ENCODE measurements at regions of chr19 and their contacts with region 1.

Region 1: DNA sequence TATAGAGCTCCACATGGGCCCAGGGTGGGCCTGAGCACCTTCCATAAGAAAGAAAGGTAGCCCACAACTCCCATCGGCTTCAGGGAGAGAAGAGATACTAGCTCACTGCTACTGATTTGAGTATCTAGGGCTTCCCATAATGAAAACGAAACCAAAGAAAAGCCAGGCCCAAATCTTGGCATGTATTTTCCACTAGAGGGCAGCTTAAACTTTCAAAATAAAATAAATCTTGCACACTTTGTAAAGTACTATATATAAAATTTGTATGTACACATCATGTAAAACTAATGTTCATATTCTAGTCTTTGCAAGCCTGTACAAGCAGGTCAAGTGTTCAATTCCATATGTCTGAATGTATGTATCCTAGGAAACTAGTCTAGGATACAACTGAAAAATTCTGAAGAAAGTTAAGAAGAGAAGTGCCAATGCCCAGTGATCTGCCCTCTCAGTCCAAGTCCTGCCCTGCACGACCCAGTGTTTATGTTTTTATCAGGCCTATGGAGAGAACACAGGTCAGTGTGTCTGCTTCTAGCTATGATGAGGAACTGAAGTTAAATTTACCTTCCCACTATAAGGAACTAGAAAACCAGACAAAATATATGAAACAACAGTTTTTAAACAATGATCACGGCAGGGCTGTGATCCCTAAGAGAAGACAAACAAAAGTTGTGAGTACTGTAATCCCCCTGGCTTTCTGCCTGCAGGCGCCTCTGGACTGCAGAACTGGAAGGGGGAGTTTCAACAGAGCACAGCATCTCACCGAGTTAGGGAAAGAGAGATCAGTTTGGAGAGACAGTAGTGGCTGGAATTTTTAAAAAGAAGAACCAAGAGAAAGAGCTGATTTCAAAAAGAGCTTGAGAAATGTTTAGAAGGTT is 475.7 kb downstream of the UQCRFS1 start:
- DNase-seq: peak in 2 of 5 donors; percentile 69 to 71
- H3K4me3 ChIP-seq: peak overlapping the region in 1 of 3 donors; percentile 29
- H3K27ac ChIP-seq: no peak overlapping the region
- H3K4me1 ChIP-seq: no peaks in the 10 kb centered on the region
- H3K27me3 ChIP-seq: no peaks in the 10 kb centered on the region
- CTCF ChIP-seq: peak; percentile 56

Region 2: GRCh38 chr19:28577233-28577632 is 160.0 kb before region 1 on chr19:
- intact Hi-C with region 1: no loop called
- DNase-seq: peak in 4 of 5 donors; percentile 72 to 89 (median 82)
- H3K4me3 ChIP-seq: no peak overlapping the region
- H3K27ac ChIP-seq: no peak overlapping the region
- H3K4me1 ChIP-seq: no peaks in the 10 kb centered on the region
- H3K27me3 ChIP-seq: no peaks in the 10 kb centered on the region
- CTCF ChIP-seq: no peak

Region 3: GRCh38 chr19:29263305-29264135 is 526.3 kb after region 1 on chr19:
- intact Hi-C with region 1: loop called (anchors 10 kb)
- DNase-seq: peak in 4 of 5 donors; percentile 61 to 73 (median 68)
- H3K4me3 ChIP-seq: no peak overlapping the region
- H3K27ac ChIP-seq: no peak overlapping the region
- H3K4me1 ChIP-seq: no peaks in the 10 kb centered on the region
- H3K27me3 ChIP-seq: no peaks in the 10 kb centered on the region
- CTCF ChIP-seq: peak; percentile 67

Measured in kidney (tissue), 22 donors.